Heart right ventricle (tissue), 16 donors: ENCODE measurements at regions of chr5 and their contacts with region 1.

Region 1: GRCh38 chr5:55338810-55339243 is 31.0 kb downstream of the MTREX start:
- DNase-seq: no peak
- ATAC-seq: peak in 3 of 8 donors; percentile 51 to 62 (median 59)
- H3K4me3 ChIP-seq: no peak overlapping the region
- H3K27ac ChIP-seq: no peak overlapping the region
- H3K4me1 ChIP-seq: peaks cover 0 to 16% (median 0%) of the 10 kb centered on the region in 9 donors
- H3K27me3 ChIP-seq: no peaks in the 10 kb centered on the region
- CTCF ChIP-seq: no peak

Region 2: DNA sequence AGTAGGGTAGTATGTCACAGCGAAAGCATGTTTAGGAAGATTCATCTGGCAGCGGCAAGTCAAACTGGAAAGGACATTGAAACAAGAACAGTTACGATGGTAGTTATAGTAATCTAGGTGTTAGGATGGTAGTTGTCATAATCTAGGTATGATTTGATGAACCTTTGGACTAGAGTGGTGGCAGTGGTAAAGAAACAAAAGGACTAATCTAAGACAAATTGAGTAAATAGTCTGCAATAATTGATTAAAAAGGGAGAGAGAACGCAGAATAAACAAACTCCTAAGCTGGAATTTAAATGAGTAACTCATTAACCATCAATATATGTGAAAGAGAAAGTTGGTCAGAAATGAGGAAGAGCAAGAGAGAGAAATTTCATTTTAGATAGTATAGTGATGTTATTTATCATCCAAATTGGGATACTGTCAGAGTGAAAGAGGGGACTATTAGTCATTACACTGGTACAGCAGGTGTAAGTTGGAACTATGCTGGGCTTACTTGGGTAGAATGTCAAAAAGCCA is 25.8 kb after region 1 on chr5:
- intact Hi-C with region 1: no loop called
- DNase-seq: no peak
- ATAC-seq: no peak
- H3K4me3 ChIP-seq: no peak overlapping the region
- H3K27ac ChIP-seq: no peak overlapping the region
- H3K4me1 ChIP-seq: no peaks in the 10 kb centered on the region
- H3K27me3 ChIP-seq: no peaks in the 10 kb centered on the region
- CTCF ChIP-seq: no peak

Region 3: DNA sequence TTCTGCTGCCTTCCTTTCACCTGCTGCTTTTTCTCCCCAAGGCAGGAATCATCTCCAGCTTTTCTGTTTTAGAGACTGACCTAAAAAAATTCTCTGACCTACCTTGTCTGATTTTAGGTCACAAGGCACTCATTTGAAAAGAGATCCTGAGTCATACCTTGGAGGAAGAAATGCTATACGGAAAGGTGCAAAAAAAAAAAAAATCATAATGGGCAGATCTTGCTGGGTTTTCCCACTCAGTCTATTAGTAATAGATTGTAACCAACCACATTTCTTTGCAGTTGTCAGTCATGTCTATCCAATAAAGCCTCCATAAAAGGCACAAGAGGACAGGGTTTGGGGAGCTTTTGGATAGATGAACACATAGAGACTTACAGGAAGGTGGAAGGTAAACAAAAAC is 39.0 kb after region 1 on chr5:
- intact Hi-C with region 1: loop called in 1 of 10 experiments (anchors 5 kb)
- DNase-seq: no peak
- ATAC-seq: no peak
- H3K4me3 ChIP-seq: no peak overlapping the region
- H3K27ac ChIP-seq: no peak overlapping the region
- H3K4me1 ChIP-seq: no peaks in the 10 kb centered on the region
- H3K27me3 ChIP-seq: no peaks in the 10 kb centered on the region
- CTCF ChIP-seq: no peak